Naive thymus-derived CD4-positive, alpha-beta T cell (primary cell): ENCODE measurements at regions of chr11 and their contacts with region 1.

Region 1: DNA sequence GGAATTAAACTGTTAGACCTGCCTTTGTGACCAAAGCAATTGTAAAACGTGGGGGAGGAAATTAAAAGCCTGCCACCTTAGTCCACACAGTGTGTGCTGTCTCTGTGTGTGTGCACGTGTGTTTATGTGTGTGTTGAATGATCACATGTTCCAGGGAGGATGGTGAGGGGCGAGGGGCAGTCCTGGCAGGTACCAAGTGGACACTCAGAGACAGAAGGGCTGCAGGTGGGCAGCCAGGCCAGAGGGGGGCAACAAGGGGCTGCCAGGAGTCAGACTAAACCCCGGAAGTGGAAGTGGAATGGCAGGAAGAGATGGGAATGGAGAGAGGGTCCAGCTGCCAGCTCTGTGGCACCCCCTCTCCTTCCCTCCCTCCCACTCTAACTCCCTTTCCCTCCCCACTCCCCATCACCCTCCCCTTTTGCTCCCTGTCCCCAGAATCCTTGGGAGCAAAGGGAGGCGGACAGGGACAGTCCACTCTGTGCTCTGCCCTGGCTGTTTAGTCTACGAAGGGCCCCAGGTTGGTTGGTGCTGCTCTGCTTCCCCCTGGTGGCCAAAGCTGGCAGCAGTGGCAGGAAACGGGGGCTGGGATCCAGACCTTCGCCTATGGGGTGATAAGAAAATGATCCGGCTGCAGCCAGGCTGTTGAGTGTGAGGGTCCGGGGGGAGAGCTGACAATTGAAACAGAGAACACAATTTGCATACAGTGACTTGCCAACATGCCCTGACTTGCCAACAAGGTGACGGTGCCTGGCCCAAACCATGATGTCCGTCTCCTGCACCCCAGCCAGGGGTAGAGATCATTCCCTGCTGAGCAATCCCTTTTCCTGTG is 24.4 kb downstream of the P2RY2 start:
- DNase-seq: peak in 8 of 9 donors; percentile 26 to 76 (median 56)
- ATAC-seq: peak; percentile 93
- H3K4me3 ChIP-seq: no peak overlapping the region
- H3K4me3 Mint-ChIP-seq: peak overlapping the region in 4 of 10 donors; percentile 2 to 65 (median 48)
- H3K27ac ChIP-seq: no peak overlapping the region
- H3K27ac Mint-ChIP-seq: peak overlapping the region in 1 of 9 donors; percentile 5
- H3K4me1 ChIP-seq: peaks cover 0 to 6% of the 10 kb centered on the region in 2 donors
- H3K4me1 Mint-ChIP-seq: peaks cover 0 to 7% (median 0%) of the 10 kb centered on the region in 7 donors
- H3K27me3 ChIP-seq: no peaks in the 10 kb centered on the region
- H3K27me3 Mint-ChIP-seq: peaks cover 0 to 18% (median 0%) of the 10 kb centered on the region in 5 donors

Region 2: DNA sequence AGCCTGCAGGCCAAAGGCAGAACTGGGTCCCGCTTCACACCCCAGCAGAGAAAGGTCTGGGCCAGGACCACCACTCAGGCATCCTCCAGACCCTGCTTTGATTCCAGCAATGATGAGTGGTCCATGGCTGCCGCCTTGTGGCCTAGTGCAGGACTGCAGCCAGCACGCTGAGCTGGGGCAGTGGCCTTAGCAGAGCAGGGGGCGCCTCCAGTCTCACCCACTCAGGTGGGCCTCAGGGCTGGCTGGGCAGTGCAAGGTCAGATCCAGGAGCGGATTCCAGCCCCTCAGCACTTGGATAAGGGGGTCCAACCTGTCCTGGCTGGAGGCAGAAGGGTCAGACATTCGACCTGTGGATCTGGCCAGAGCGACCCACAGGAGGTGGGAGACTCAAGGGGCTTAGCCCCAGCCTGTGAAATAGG is 558.7 kb before region 1 on chr11:
- CTCF ChIA-PET with region 1: no interaction called
- POLR2A ChIA-PET with region 1: no interaction called
- intact Hi-C with region 1: loop called in 1 of 2 experiments (anchors 5 kb)
- DNase-seq: peak; percentile 36 to 75 (median 56)
- ATAC-seq: peak; percentile 77
- H3K4me3 ChIP-seq: no peak overlapping the region
- H3K4me3 Mint-ChIP-seq: no peak overlapping the region
- H3K27ac ChIP-seq: no peak overlapping the region
- H3K27ac Mint-ChIP-seq: peak overlapping the region in 3 of 9 donors; percentile 59 to 74 (median 61)
- H3K4me1 ChIP-seq: no peaks in the 10 kb centered on the region
- H3K4me1 Mint-ChIP-seq: peaks cover 7 to 46% (median 16%) of the 10 kb centered on the region in 7 donors
- H3K27me3 ChIP-seq: no peaks in the 10 kb centered on the region
- H3K27me3 Mint-ChIP-seq: peaks cover 0 to 11% (median 0%) of the 10 kb centered on the region in 5 donors

Region 3: DNA sequence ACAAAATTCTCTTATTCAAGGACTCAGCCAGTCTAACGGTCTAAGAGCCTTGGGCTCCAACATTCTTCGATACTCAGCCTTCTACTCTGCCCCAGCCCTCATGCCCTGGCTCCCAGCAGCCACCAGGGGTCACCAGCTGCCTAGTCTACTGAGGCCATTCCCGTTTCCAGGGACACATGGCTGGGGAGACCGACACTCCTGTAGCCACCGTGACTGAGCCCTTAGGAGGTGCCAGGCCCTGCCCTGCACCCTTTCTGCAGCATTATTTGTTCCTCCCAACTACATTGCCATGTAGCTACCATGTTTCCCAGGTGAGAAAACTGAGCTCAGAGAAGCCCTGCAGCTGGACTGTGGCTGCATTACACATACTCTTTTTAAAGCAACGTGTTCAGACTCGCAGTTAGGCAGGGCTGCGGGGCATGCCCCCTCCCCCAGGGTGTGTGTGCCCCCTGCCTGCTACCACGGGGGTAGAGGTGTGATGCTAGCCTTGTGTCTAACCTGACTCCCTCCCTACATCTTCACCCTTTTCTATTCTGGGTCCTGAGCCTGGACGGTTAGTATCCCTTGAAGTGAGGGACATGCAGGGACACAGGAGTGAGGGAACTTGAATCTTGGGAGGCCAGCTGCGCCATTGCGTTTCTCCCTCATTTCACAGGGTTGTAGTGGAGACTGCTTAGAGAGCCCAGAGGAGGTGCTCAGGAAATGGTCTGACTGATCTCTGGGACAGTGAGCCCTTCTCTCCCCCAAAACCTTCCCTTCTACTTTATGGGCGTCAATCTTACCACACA is 410.8 kb before region 1 on chr11:
- CTCF ChIA-PET with region 1: no interaction called
- POLR2A ChIA-PET with region 1: no interaction called
- intact Hi-C with region 1: loop called in 1 of 2 experiments (anchors 5 kb)
- DNase-seq: peak in 7 of 9 donors; percentile 31 to 57 (median 45)
- ATAC-seq: peak; percentile 79
- H3K4me3 ChIP-seq: no peak overlapping the region
- H3K4me3 Mint-ChIP-seq: no peak overlapping the region
- H3K27ac ChIP-seq: peak overlapping the region; percentile 22
- H3K27ac Mint-ChIP-seq: peak overlapping the region in 8 of 9 donors; percentile 52 to 86 (median 80)
- H3K4me1 ChIP-seq: peaks cover 0 to 4% of the 10 kb centered on the region in 2 donors
- H3K4me1 Mint-ChIP-seq: peaks cover 5 to 37% (median 13%) of the 10 kb centered on the region in 7 donors
- H3K27me3 ChIP-seq: no peaks in the 10 kb centered on the region
- H3K27me3 Mint-ChIP-seq: no peaks in the 10 kb centered on the region

Region 4: GRCh38 chr11:73028611-73029010 is 213.9 kb before region 1 on chr11:
- CTCF ChIA-PET with region 1: no interaction called
- POLR2A ChIA-PET with region 1: no interaction called
- intact Hi-C with region 1: no loop called
- DNase-seq: no peak
- ATAC-seq: peak; percentile 41
- H3K4me3 ChIP-seq: no peak overlapping the region
- H3K4me3 Mint-ChIP-seq: peak overlapping the region in 2 of 10 donors; percentile 45
- H3K27ac ChIP-seq: no peak overlapping the region
- H3K27ac Mint-ChIP-seq: no peak overlapping the region
- H3K4me1 ChIP-seq: peaks cover 0 to 6% of the 10 kb centered on the region in 2 donors
- H3K4me1 Mint-ChIP-seq: peaks cover 12 to 50% (median 40%) of the 10 kb centered on the region in 7 donors
- H3K27me3 ChIP-seq: no peaks in the 10 kb centered on the region
- H3K27me3 Mint-ChIP-seq: no peaks in the 10 kb centered on the region

Region 5: DNA sequence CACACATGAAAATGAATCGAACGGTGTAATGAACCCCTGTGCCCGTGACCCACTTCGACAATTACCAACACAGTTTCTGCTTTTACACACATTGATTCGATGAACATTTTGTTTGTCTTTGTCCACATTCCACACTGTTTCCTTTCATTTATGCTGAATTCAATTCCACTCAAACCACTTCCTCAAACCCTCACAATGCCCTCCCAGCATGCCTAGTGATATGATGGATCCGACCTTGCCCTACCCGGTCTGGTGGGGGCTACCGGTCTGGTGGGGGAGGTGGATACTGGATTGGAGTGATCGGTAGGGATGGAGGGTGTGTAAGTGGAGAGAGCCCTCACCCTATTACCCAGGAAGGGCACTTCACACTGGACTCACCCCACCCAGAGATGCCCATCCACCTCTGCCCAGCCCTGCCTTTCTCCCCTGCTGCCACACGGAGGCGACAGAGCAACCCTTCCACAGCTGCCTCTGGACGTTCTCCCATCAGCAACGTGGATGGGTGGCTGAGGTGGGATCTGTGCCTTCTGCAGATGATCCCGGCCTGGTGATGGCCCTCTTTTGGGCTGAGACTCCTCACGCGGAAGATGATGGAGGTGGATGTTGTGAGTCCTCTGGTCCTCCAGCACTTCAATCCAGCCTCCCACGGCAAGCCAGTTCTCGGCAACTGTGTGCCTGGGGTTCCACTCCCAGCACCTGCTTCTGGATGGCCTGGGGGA is 57.4 kb before region 1 on chr11:
- CTCF ChIA-PET with region 1: no interaction called
- POLR2A ChIA-PET with region 1: no interaction called
- intact Hi-C with region 1: loop called in 1 of 2 experiments (anchors 1 kb)
- DNase-seq: peak in 7 of 9 donors; percentile 9 to 56 (median 31)
- ATAC-seq: peak; percentile 79
- H3K4me3 ChIP-seq: no peak overlapping the region
- H3K4me3 Mint-ChIP-seq: peak overlapping the region in 1 of 10 donors; percentile 20
- H3K27ac ChIP-seq: no peak overlapping the region
- H3K27ac Mint-ChIP-seq: no peak overlapping the region
- H3K4me1 ChIP-seq: no peaks in the 10 kb centered on the region
- H3K4me1 Mint-ChIP-seq: peaks cover 0 to 8% (median 4%) of the 10 kb centered on the region in 7 donors
- H3K27me3 ChIP-seq: peaks cover 0 to 2% of the 10 kb centered on the region in 2 donors
- H3K27me3 Mint-ChIP-seq: peaks cover 0 to 30% (median 15%) of the 10 kb centered on the region in 5 donors

Region 6: GRCh38 chr11:73288873-73289707 is 46.6 kb after region 1 on chr11:
- CTCF ChIA-PET with region 1: no interaction called
- POLR2A ChIA-PET with region 1: no interaction called
- intact Hi-C with region 1: no loop called
- DNase-seq: peak in 8 of 9 donors; percentile 20 to 60 (median 36)
- ATAC-seq: peak; percentile 88
- H3K4me3 ChIP-seq: no peak overlapping the region
- H3K4me3 Mint-ChIP-seq: peak overlapping the region in 5 of 10 donors; percentile 14 to 64 (median 22)
- H3K27ac ChIP-seq: no peak overlapping the region
- H3K27ac Mint-ChIP-seq: peak overlapping the region in 1 of 9 donors; percentile 46
- H3K4me1 ChIP-seq: peaks cover 0 to 4% of the 10 kb centered on the region in 2 donors
- H3K4me1 Mint-ChIP-seq: peaks cover 0 to 26% (median 9%) of the 10 kb centered on the region in 7 donors
- H3K27me3 ChIP-seq: no peaks in the 10 kb centered on the region
- H3K27me3 Mint-ChIP-seq: peaks cover 0 to 9% (median 4%) of the 10 kb centered on the region in 5 donors

Region 7: DNA sequence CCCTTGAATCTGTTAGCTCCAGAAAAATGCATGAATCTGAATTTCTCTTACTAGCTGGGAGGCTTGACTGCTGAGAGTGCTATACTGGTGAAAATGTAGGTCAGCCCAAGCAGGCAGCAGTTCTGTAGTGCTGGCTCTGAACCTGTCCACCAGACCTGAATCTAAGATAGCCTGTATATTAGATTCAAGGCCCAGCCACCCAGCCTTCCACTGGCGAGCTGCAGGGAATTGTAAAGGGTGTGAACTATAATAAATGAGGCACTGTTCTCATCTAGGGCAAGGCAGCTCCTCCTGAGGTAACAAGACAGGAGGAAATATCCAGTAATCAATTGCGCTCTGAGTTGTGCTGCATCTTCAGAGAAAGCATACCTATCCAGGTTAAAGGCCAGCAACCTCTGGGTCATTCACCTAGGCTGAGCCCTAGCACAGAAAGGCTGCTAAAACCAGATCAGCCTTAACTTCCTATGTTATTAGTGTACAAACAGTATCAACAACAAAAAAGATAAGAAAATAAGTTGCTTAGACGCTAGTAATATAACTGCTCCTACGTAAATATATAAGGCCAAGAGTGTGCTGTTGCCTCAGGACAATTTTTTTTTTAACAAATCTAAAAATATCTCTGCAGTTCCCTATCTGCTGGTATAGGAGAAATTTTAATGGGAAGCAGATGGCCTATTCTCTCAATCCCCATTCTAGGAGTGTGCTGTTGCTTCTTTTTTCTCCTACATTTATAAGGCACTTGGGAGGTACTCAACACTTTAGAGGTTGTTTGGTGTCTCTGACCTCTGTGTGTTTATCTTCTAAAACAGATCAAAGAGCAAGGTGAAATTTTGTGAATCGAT is 196.8 kb after region 1 on chr11:
- CTCF ChIA-PET with region 1: no interaction called
- POLR2A ChIA-PET with region 1: no interaction called
- intact Hi-C with region 1: no loop called
- DNase-seq: no peak
- ATAC-seq: no peak
- H3K4me3 ChIP-seq: no peak overlapping the region
- H3K4me3 Mint-ChIP-seq: no peak overlapping the region
- H3K27ac ChIP-seq: no peak overlapping the region
- H3K27ac Mint-ChIP-seq: no peak overlapping the region
- H3K4me1 ChIP-seq: no peaks in the 10 kb centered on the region
- H3K4me1 Mint-ChIP-seq: peaks cover 0 to 7% (median 0%) of the 10 kb centered on the region in 7 donors
- H3K27me3 ChIP-seq: no peaks in the 10 kb centered on the region
- H3K27me3 Mint-ChIP-seq: no peaks in the 10 kb centered on the region